B cell (primary cell): ENCODE measurements at regions of chr9 and their contacts with region 1.

Region 1: DNA sequence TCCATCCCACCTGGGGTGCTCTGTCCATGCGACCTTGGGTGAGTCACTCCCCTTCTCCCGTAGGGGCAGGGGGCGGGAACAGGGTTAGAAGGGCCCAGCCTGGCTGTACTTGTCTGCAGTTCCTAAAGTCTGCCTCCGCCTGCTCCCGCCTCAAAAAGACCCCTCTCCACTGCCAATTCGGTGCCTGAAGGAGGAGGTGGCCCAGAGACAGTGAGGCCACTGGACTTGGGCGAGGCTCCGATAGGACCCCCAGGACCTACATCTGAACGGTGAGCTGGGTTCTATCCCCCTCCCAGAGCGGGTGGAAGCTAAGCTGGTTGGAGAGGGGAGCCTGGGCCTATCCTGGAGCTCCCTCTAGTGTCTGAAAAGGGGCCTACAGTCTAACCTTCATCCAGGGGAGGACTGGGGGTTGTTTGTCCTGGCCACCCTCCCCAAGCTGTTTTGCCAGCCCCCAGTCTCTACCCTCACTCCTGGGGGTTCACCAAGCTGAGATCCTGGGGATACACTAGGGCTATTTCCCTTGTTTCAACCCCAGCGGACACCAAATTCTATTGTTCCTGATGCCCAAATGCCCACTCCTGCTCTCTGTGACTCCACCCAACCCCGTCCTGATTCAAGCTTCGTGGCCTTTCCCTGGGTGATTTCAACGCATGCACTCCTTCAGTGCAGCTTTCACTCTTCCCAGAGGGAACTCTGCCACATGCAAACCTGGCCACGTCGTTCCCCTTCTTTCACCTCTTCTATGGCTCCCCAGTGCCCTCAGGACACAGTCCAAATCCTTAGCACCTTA is 6.1 kb upstream of the CRB2 start:
- DNase-seq: peak; percentile 85
- ATAC-seq: peak; percentile 87
- H3K4me3 ChIP-seq: peak overlapping the region in 3 of 5 experiments; percentile 19 to 50 (median 23)
- H3K4me3 Mint-ChIP-seq: peak overlapping the region; percentile 20
- H3K27ac ChIP-seq: no peak overlapping the region
- H3K27ac Mint-ChIP-seq: no peak overlapping the region
- H3K4me1 ChIP-seq: peaks cover 30 to 52% of the 10 kb centered on the region in 2 donors
- H3K4me1 Mint-ChIP-seq: peaks cover 19% of the 10 kb centered on the region
- H3K27me3 ChIP-seq: peaks cover 0 to 4% (median 0%) of the 10 kb centered on the region in 4 experiments
- H3K27me3 Mint-ChIP-seq: peaks cover 4% of the 10 kb centered on the region
- CTCF ChIP-seq: peak; percentile 95

Region 2: DNA sequence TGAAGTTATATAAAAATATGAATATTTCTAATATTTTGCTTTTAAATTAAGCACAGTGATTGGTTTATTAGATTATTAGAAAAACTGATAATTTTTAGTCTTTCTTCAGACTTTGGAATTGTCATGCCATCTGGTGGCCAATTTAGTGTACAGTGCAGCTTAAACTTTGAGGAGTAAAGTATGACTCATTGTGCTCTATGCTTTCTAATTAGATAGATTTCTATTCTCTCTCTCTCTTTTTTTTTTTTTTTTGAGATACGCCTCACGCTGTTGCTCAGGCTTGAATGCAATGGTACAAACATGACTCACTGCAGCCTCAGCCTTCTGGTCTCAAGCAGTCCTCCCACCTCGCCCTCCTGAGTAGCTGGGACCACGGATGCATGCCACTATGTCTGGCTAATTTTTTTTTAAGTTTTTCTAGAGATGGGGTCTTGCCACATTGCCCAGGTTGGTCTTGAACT is 358.5 kb before region 1 on chr9:
- CTCF ChIA-PET with region 1: interaction called, 10 read pairs
- POLR2A ChIA-PET with region 1: interaction called, 3 read pairs
- intact Hi-C with region 1: loop called (anchors 10 kb)
- DNase-seq: peak; percentile 52
- ATAC-seq: peak; percentile 58
- H3K4me3 ChIP-seq: no peak overlapping the region
- H3K4me3 Mint-ChIP-seq: no peak overlapping the region
- H3K27ac ChIP-seq: no peak overlapping the region
- H3K27ac Mint-ChIP-seq: no peak overlapping the region
- H3K4me1 ChIP-seq: no peaks in the 10 kb centered on the region
- H3K4me1 Mint-ChIP-seq: peaks cover 3% of the 10 kb centered on the region
- H3K27me3 ChIP-seq: no peaks in the 10 kb centered on the region
- H3K27me3 Mint-ChIP-seq: no peaks in the 10 kb centered on the region
- CTCF ChIP-seq: peak; percentile 81

Region 3: GRCh38 chr9:123119566-123119965 is 230.3 kb before region 1 on chr9:
- CTCF ChIA-PET with region 1: interaction called, 10 read pairs
- POLR2A ChIA-PET with region 1: no interaction called
- intact Hi-C with region 1: no loop called
- DNase-seq: no peak
- ATAC-seq: no peak
- H3K4me3 ChIP-seq: no peak overlapping the region
- H3K4me3 Mint-ChIP-seq: no peak overlapping the region
- H3K27ac ChIP-seq: no peak overlapping the region
- H3K27ac Mint-ChIP-seq: peak overlapping the region; percentile 78
- H3K4me1 ChIP-seq: no peaks in the 10 kb centered on the region
- H3K4me1 Mint-ChIP-seq: peaks cover 11% of the 10 kb centered on the region
- H3K27me3 ChIP-seq: no peaks in the 10 kb centered on the region
- H3K27me3 Mint-ChIP-seq: no peaks in the 10 kb centered on the region
- CTCF ChIP-seq: no peak

Region 4: GRCh38 chr9:123225374-123225813 is 124.5 kb before region 1 on chr9:
- CTCF ChIA-PET with region 1: interaction called, 28 read pairs
- POLR2A ChIA-PET with region 1: no interaction called
- intact Hi-C with region 1: no loop called
- DNase-seq: peak; percentile 86
- ATAC-seq: peak; percentile 92
- H3K4me3 ChIP-seq: no peak overlapping the region
- H3K4me3 Mint-ChIP-seq: peak overlapping the region; percentile 64
- H3K27ac ChIP-seq: peak overlapping the region; percentile 46 to 77
- H3K27ac Mint-ChIP-seq: peak overlapping the region; percentile 79
- H3K4me1 ChIP-seq: peaks cover 65 to 68% of the 10 kb centered on the region in 2 donors
- H3K4me1 Mint-ChIP-seq: peaks cover 55% of the 10 kb centered on the region
- H3K27me3 ChIP-seq: no peaks in the 10 kb centered on the region
- H3K27me3 Mint-ChIP-seq: no peaks in the 10 kb centered on the region
- CTCF ChIP-seq: peak; percentile 72

Region 5: GRCh38 chr9:123268240-123268949 is 81.5 kb before region 1 on chr9 and contains the start of gene STRBP:
- CTCF ChIA-PET with region 1: interaction called, 11 read pairs
- POLR2A ChIA-PET with region 1: interaction called, 6 read pairs
- intact Hi-C with region 1: no loop called
- DNase-seq: peak; percentile 99
- ATAC-seq: peak; percentile 91
- H3K4me3 ChIP-seq: peak within 1 kb of the TSS; percentile 55 to 95 (median 79)
- H3K4me3 Mint-ChIP-seq: peak within 1 kb of the TSS; percentile 91
- H3K27ac ChIP-seq: peak within 1 kb of the TSS; percentile 84 to 93
- H3K27ac Mint-ChIP-seq: peak within 1 kb of the TSS; percentile 89
- H3K4me1 ChIP-seq: peaks cover 41 to 51% of the 10 kb centered on the region in 2 donors
- H3K4me1 Mint-ChIP-seq: peaks cover 46% of the 10 kb centered on the region
- H3K27me3 ChIP-seq: no peaks in the 10 kb centered on the region
- H3K27me3 Mint-ChIP-seq: no peaks in the 10 kb centered on the region
- CTCF ChIP-seq: no peak
- total RNA-seq, gene STRBP: 189 and 197 TPM in 2 replicates

Region 6: DNA sequence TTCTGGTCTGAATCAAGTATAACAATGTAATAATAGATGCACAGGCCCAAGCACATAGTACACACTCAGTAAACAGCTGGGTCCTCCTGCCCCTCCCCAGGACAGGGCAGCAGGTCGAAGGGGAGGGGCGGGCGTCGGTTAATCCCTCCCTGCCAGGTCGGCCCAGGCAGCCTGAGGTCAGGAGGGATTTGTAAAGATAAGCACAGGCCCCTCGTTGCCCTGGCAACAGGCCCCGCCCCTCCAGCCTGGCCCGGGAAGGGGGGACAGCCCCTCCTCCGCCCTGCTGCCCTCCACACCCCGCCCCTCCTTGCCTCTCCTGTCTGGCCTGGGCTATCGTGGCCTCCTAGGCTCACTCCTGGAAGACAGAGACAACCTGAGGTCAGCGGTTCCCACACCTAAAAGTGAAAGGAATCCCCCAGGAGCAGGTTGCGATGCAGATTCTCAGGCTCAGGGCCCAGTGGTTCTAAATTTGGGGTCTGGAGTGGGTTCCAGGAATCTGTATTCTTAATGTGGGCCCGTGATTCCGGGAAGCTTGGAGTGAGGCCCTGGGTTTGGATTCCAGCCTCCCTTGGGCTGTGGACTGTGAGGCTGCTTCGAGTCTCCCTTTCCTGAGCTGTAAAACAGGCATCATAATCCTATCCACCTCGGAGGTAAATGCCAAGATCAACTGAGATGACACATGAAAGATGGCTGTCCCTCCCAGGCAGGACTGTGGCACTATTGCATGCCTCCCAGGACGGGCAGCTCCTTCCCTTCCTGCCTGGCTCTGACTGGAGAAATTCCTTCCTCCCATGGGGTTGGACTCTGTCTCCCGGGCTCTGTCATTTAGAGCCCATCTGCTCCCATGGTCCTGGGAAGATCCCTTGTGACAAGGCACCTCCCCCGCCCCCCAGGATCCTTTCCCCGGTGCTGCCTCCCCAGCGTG is 10.5 kb after region 1 on chr9:
- CTCF ChIA-PET with region 1: interaction called, 16 read pairs
- POLR2A ChIA-PET with region 1: no interaction called
- intact Hi-C with region 1: no loop called
- DNase-seq: peak; percentile 59
- ATAC-seq: peak; percentile 80
- H3K4me3 ChIP-seq: no peak overlapping the region
- H3K4me3 Mint-ChIP-seq: no peak overlapping the region
- H3K27ac ChIP-seq: no peak overlapping the region
- H3K27ac Mint-ChIP-seq: peak overlapping the region; percentile 46
- H3K4me1 ChIP-seq: peaks cover 4 to 8% of the 10 kb centered on the region in 2 donors
- H3K4me1 Mint-ChIP-seq: peaks cover 16% of the 10 kb centered on the region
- H3K27me3 ChIP-seq: no peaks in the 10 kb centered on the region
- H3K27me3 Mint-ChIP-seq: peaks cover 2% of the 10 kb centered on the region
- CTCF ChIP-seq: no peak

Region 7: DNA sequence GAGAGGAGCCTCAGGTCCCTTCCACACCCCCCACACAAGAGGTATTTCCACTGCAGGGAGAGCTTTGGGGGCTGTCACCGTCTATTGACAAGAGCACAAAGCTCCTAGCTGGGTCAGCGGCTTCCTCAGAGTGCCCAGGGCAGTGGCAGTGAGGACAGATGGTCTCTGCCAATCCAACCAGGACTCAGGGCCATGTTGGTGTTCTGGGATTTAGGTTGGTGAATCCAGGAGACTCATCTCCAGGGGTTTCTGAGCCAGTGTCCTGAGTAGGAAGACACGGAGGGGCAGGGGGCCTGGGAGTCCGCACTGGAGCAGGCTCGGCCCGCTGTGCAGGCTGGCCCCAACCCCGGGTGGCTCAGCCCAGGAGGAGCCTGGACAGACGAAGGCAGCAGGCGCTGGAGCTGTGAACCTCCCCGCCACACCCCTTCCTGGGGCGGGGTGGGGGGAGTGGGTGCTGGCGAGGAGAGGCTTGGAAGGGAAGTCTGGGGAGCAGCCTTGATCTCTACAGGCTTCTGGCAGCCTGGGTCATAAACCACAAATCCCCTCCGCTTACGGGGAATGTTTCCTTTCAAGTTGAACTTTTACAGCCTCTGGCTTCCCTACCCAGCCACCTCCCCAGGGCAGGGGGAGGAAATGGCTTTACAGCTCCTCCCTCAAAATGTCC is 25.7 kb after region 1 on chr9:
- CTCF ChIA-PET with region 1: no interaction called
- POLR2A ChIA-PET with region 1: no interaction called
- intact Hi-C with region 1: no loop called
- DNase-seq: no peak
- ATAC-seq: no peak
- H3K4me3 ChIP-seq: no peak overlapping the region
- H3K4me3 Mint-ChIP-seq: no peak overlapping the region
- H3K27ac ChIP-seq: no peak overlapping the region
- H3K27ac Mint-ChIP-seq: no peak overlapping the region
- H3K4me1 ChIP-seq: peaks cover 0 to 9% of the 10 kb centered on the region in 2 donors
- H3K4me1 Mint-ChIP-seq: peaks cover 18% of the 10 kb centered on the region
- H3K27me3 ChIP-seq: peaks cover 0 to 44% (median 11%) of the 10 kb centered on the region in 4 experiments
- H3K27me3 Mint-ChIP-seq: peaks cover 29% of the 10 kb centered on the region
- CTCF ChIP-seq: no peak

Region 8: GRCh38 chr9:123406691-123407216 is 56.9 kb after region 1 on chr9:
- CTCF ChIA-PET with region 1: no interaction called
- POLR2A ChIA-PET with region 1: no interaction called
- intact Hi-C with region 1: no loop called
- DNase-seq: no peak
- ATAC-seq: no peak
- H3K4me3 ChIP-seq: no peak overlapping the region
- H3K4me3 Mint-ChIP-seq: no peak overlapping the region
- H3K27ac ChIP-seq: no peak overlapping the region
- H3K27ac Mint-ChIP-seq: no peak overlapping the region
- H3K4me1 ChIP-seq: no peaks in the 10 kb centered on the region
- H3K4me1 Mint-ChIP-seq: no peaks in the 10 kb centered on the region
- H3K27me3 ChIP-seq: no peaks in the 10 kb centered on the region
- H3K27me3 Mint-ChIP-seq: no peaks in the 10 kb centered on the region
- CTCF ChIP-seq: no peak

Region 9: DNA sequence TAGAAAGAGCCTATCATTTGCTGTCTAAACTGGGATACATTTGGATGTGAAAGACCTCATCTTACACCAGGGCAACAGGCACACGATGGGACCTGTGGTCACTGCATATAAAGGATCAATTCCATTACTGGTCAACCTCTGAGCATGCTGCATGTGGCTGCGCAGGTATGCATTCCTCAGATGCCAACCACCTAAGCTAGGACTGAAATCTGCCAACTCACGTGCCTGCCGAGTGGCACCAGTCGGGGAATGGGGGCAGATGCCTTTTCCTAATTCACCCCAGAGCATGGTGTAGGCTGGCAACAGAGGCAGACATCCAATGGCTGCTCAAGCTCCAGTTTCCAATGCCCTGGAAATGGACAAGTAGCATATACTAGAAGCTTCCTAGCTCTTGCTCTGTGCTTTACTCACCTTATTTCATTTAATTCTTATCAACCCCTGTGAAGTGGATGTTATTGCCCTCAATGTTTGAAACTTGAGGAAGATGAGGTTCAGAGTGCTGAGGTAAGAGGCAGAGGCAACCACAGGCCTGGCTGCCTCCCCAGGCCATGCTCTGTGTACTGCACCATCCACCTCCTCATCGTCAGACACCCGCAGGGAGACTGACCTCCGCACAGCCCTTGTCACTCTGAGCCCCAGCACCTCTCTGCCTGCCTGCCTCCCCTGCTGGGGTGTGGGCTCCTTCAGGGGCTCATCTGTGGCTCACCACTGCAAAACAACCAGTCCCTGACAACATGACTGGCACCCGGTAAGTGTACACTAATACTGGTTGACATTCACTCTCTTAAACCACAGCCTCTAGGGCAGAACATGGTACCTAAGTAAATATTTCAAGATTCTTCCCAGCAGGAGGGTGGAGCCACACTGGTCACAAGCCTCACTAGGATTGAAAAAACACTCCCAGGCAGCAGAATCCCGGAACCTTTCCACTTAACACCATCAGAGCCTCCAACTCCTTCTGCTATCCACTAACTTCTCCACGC is 234.6 kb after region 1 on chr9:
- CTCF ChIA-PET with region 1: no interaction called
- POLR2A ChIA-PET with region 1: no interaction called
- intact Hi-C with region 1: no loop called
- DNase-seq: no peak
- ATAC-seq: no peak
- H3K4me3 ChIP-seq: no peak overlapping the region
- H3K4me3 Mint-ChIP-seq: no peak overlapping the region
- H3K27ac ChIP-seq: no peak overlapping the region
- H3K27ac Mint-ChIP-seq: no peak overlapping the region
- H3K4me1 ChIP-seq: no peaks in the 10 kb centered on the region
- H3K4me1 Mint-ChIP-seq: no peaks in the 10 kb centered on the region
- H3K27me3 ChIP-seq: no peaks in the 10 kb centered on the region
- H3K27me3 Mint-ChIP-seq: no peaks in the 10 kb centered on the region
- CTCF ChIP-seq: no peak

Region 10: DNA sequence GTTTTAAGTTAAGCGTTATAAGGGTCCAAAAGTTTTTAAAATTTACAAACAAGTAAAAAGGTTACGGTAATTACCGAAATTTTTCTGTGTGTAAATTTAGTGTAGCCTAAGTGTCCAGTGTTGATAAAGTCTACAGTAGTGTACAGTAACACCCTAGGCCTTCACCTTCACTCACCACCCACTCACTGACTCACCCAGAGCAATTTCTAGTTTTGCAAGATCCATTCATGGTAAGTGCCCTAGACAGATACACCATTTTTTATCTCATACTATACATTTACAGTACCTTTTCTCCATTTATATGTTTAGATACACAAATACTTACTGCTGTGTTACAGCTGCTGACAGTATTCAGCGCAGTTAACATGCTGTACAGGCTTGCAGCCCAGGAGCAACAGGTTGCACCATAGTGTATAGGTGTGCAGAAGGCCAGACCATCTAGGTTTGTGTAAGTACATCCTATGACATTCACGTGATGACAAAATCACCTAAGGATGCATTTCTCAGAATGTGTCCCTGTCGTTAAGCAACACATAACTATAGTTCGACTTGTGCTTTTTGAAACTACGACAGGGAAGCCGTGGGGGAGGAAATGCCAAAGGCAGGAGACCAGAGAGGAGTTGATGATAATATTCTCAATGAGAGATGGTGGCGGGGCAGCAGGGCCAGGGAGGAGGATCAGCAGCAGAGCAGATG is 1016.7 kb after region 1 on chr9:
- CTCF ChIA-PET with region 1: no interaction called
- POLR2A ChIA-PET with region 1: no interaction called
- intact Hi-C with region 1: no loop called
- DNase-seq: no peak
- ATAC-seq: no peak
- H3K4me3 ChIP-seq: no peak overlapping the region
- H3K4me3 Mint-ChIP-seq: no peak overlapping the region
- H3K27ac ChIP-seq: no peak overlapping the region
- H3K27ac Mint-ChIP-seq: peak overlapping the region; percentile 27
- H3K4me1 ChIP-seq: no peaks in the 10 kb centered on the region
- H3K4me1 Mint-ChIP-seq: no peaks in the 10 kb centered on the region
- H3K27me3 ChIP-seq: no peaks in the 10 kb centered on the region
- H3K27me3 Mint-ChIP-seq: no peaks in the 10 kb centered on the region
- CTCF ChIP-seq: no peak